ENCODE measurements at regions of chr7 and their contacts with region 1.

Region 1: GRCh38 chr7:5296611-5297226 is 14.0 kb downstream of the SLC29A4 start:
- DNase-seq: no peak
- ATAC-seq: no peak; the same call in 1 of the 2 replicates
- H3K4me3 ChIP-seq: no peak overlapping the region
- H3K27ac ChIP-seq: no peak overlapping the region
- H3K4me1 ChIP-seq: no peaks in the 10 kb centered on the region
- H3K27me3 ChIP-seq: no peaks in the 10 kb centered on the region
- CTCF ChIP-seq: no peak

Region 2: DNA sequence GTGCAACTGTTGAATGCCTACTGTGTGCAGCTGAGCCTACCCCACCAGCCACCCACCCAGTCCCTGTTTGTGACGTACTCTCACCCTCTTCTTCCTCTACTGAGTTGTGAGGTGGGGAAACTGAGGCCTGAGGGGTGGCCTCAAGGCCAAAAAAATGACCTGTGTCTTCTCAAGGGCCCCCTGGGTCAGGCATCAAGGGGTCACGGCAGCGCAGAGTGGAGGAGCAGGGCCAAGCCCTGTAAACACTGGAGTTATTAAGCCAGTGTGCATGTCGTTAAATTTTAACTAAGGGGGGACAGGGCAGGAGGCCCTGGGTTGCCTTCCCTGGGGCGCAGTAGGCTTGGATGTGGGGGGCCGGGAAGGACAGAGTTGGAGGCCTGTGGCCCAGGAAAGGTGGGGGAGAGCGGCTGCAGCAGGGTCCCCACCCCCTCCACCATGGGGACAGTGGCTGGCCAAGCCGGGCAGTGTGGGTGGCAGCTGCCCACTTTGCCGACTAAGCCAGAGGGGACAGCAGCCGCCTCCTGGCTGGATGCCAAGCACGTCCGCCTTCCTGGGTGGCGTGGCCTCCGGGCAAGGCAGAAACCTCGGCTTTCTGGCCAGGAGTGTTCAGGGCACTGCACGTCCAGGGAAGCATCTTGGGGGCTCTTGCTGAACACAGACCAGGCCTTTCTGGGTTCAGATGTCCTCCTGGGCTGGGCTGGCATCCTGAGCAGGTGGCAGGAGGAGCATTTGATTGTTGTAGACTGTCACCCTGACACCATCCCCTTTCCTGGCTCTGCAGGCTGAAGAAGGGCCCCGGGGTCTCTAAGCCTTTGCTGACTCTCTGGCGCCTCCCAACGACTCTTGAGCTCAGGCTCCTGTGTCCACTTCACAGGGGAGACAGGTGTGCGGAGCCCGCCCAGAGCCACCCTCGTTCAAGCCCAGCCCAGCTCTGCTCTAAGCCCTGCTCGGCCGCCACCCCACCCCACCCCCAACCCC is 12.1 kb before region 1 on chr7:
- CTCF ChIA-PET with region 1: interaction called, 5 read pairs
- POLR2A ChIA-PET with region 1: interaction called, 10 read pairs
- in situ Hi-C with region 1: no loop called
- intact Hi-C with region 1: no loop called
- DNase-seq: no peak
- ATAC-seq: peak; percentile 65
- H3K4me3 ChIP-seq: peak overlapping the region in 1 of 2 experiments; percentile 14; a peak in 1 of 4 replicates
- H3K27ac ChIP-seq: no peak overlapping the region
- H3K4me1 ChIP-seq: peaks cover 8% of the 10 kb centered on the region
- H3K27me3 ChIP-seq: no peaks in the 10 kb centered on the region
- CTCF ChIP-seq: peak; percentile 86; the same call in 1 of the 2 replicates

Region 3: DNA sequence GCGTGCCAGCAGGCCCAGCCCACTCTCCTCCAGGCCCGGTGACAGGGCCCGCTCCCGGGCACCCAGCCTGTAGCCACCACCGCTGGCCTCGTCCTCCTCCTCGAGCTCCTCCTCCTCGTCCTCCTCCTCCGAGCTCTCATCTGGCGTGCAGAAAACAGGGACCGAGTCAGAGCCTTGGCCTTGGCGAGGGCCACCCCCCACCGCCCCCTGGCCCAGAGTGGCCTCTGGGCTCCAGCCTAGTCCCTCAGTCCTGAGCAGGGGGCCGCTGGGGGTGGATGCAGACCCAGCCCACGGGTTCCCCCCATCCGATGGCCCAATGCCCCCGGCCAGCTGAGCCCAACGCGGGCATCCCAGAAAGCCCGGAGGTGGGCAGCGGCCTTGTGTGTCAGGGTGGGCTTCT is 49.0 kb after region 1 on chr7:
- CTCF ChIA-PET with region 1: interaction called, 12 read pairs
- POLR2A ChIA-PET with region 1: no interaction called
- in situ Hi-C with region 1: no loop called
- intact Hi-C with region 1: no loop called
- DNase-seq: no peak
- ATAC-seq: 0 out of 2 replicates have a peak, but pooled peaks have one; percentile 15
- H3K4me3 ChIP-seq: no peak overlapping the region
- H3K27ac ChIP-seq: no peak overlapping the region
- H3K4me1 ChIP-seq: no peaks in the 10 kb centered on the region
- H3K27me3 ChIP-seq: no peaks in the 10 kb centered on the region
- CTCF ChIP-seq: no peak

Measured in Panc1 (cell line).